ENCODE measurements at regions of chr3 and their contacts with region 1.

Region 1: GRCh38 chr3:192816351-192816750 is 89.0 kb upstream of the FGF12 start:
- DNase-seq: no peak
- ATAC-seq: peak; percentile 64 to 72 (median 69)
- H3K4me3 ChIP-seq: no peak overlapping the region
- H3K27ac ChIP-seq: no peak overlapping the region
- H3K4me1 ChIP-seq: no peaks in the 10 kb centered on the region
- H3K27me3 ChIP-seq: no peaks in the 10 kb centered on the region
- CTCF ChIP-seq: peak; percentile 60 to 87 (median 68)
- POLR2A ChIP-seq: no peak

Region 2: GRCh38 chr3:193040836-193041672 is 224.7 kb after region 1 on chr3:
- intact Hi-C with region 1: loop called (anchors 5 to 10 kb)
- DNase-seq: no peak
- ATAC-seq: peak; percentile 64 to 76 (median 74)
- H3K4me3 ChIP-seq: no peak overlapping the region
- H3K27ac ChIP-seq: no peak overlapping the region
- H3K4me1 ChIP-seq: no peaks in the 10 kb centered on the region
- H3K27me3 ChIP-seq: no peaks in the 10 kb centered on the region
- CTCF ChIP-seq: peak; percentile 46 to 54 (median 49)
- POLR2A ChIP-seq: no peak

Measured in right lobe of liver (tissue), 6 donors.